ENCODE measurements at regions of chr11 and their contacts with region 1.

Region 1: DNA sequence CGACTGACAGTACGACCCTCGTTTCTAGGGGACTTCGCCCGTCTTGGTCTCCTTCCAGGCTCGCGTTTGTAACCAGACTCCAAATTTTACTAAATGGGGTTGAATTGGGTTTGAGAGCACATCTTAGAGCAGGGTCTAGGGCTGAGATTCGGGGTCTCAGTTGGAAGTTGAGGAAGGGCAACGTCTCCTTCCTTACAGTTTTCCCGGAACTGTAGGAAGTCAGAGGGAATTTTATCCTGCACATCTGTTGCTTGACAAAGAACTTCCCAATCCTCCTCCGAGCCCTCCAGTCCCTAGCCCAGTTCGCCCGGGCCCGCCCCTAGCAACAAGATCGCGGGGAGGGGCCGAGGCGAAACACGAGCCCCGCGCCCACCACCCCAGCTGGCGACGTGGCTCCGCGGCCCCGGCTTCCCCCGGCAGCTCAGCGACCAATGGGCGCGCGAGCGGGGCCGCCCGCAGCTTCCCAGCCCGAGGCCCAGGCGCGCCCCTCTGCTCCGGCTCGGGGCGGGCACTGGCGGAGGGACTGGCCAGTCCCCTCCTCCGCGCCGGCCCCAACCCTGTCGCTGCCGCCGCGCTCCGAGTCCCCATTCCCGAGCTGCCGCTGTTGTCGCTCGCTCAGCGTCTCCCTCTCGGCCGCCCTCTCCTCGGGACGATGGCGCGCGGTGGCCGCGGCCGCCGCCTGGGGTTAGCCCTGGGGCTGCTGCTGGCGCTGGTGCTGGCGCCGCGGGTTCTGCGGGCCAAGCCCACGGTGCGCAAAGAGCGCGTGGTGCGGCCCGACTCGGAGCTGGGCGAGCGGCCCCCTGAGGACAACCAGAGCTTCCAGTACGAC is at the start of gene RCN1:
- DNase-seq: peak; percentile 13
- ATAC-seq: peak; percentile 94
- H3K4me3 ChIP-seq: peak within 1 kb of the TSS; percentile 58 to 70 (median 62)
- H3K27ac ChIP-seq: no peak within 1 kb of the TSS
- H3K4me1 ChIP-seq: peaks cover 28% of the 10 kb centered on the region
- H3K27me3 ChIP-seq: peaks cover 0 to 40% of the 10 kb centered on the region in 2 experiments; a peak in 4 of 5 replicates
- CTCF ChIP-seq: no peak
- EP300 ChIP-seq: no peak
- POLR2A ChIP-seq: no peak
- RAD21 ChIP-seq: no peak
- total RNA-seq, gene RCN1: 14.7 and 28.5 TPM in 2 replicates

Region 2: DNA sequence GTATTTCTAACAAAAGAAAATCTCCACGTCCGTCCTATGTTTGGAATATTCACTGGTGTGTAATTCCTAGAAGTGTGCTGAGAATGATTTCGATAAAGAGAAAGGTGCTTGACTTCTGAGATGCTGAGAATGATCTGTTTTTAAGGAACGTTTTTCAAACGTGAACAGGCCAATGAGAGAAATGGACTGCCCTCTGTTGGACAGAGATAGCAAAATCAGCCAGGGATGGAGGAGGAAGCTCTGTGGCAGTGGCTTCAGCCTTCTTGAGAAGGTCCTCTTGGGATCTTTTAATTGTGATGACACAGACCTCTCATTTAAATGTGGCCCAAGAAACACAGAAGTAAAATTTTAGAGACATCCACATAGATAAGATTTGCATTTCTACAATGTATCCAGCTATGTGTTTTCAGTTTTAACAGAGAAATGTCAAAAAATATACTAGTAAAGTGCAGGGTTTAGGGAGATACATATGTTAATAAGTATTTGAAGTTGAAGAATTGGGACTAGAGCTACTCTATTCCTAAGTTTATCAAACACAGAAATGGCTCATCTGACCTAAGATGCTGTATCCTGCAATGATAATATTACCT is 83.9 kb before region 1 on chr11:
- CTCF ChIA-PET with region 1: no interaction called
- POLR2A ChIA-PET with region 1: no interaction called
- in situ Hi-C with region 1: no loop called
- intact Hi-C with region 1: no loop called
- DNase-seq: peak; percentile 13
- ATAC-seq: peak; percentile 70
- H3K4me3 ChIP-seq: no peak overlapping the region
- H3K27ac ChIP-seq: no peak overlapping the region
- H3K4me1 ChIP-seq: no peaks in the 10 kb centered on the region
- H3K27me3 ChIP-seq: peaks cover 0 to 12% of the 10 kb centered on the region in 2 experiments; a peak in 2 of 5 replicates
- CTCF ChIP-seq: peak; percentile 72
- EP300 ChIP-seq: no peak
- POLR2A ChIP-seq: no peak
- RAD21 ChIP-seq: no peak

Region 3: GRCh38 chr11:32101791-32102190 is 11.0 kb after region 1 on chr11:
- CTCF ChIA-PET with region 1: no interaction called
- POLR2A ChIA-PET with region 1: interaction called, 12 read pairs
- in situ Hi-C with region 1: no loop called
- intact Hi-C with region 1: loop called (anchors 1 kb)
- DNase-seq: no peak
- ATAC-seq: no peak
- H3K4me3 ChIP-seq: no peak overlapping the region
- H3K27ac ChIP-seq: no peak overlapping the region
- H3K4me1 ChIP-seq: peaks cover 17% of the 10 kb centered on the region
- H3K27me3 ChIP-seq: no peaks in the 10 kb centered on the region; a peak in 1 of 5 replicates
- CTCF ChIP-seq: no peak
- EP300 ChIP-seq: no peak
- POLR2A ChIP-seq: no peak
- RAD21 ChIP-seq: no peak

Region 4: GRCh38 chr11:32168924-32169323 is 78.2 kb after region 1 on chr11:
- CTCF ChIA-PET with region 1: no interaction called
- POLR2A ChIA-PET with region 1: no interaction called
- in situ Hi-C with region 1: no loop called
- intact Hi-C with region 1: no loop called
- DNase-seq: no peak
- ATAC-seq: no peak
- H3K4me3 ChIP-seq: no peak overlapping the region
- H3K27ac ChIP-seq: no peak overlapping the region
- H3K4me1 ChIP-seq: no peaks in the 10 kb centered on the region
- H3K27me3 ChIP-seq: peaks cover 0 to 26% of the 10 kb centered on the region in 2 experiments; a peak in 3 of 5 replicates
- CTCF ChIP-seq: no peak
- EP300 ChIP-seq: no peak
- POLR2A ChIP-seq: no peak
- RAD21 ChIP-seq: no peak

Region 5: GRCh38 chr11:33039274-33040032 is 948.7 kb after region 1 on chr11 and contains the start of gene TCP11L1:
- CTCF ChIA-PET with region 1: no interaction called
- POLR2A ChIA-PET with region 1: no interaction called
- in situ Hi-C with region 1: no loop called
- intact Hi-C with region 1: loop called (anchors 5 kb)
- DNase-seq: peak; percentile 83
- ATAC-seq: peak; percentile 92
- H3K4me3 ChIP-seq: peak within 1 kb of the TSS; percentile 74 to 90 (median 78)
- H3K27ac ChIP-seq: peak within 1 kb of the TSS; percentile 97
- H3K4me1 ChIP-seq: peaks cover 46% of the 10 kb centered on the region
- H3K27me3 ChIP-seq: no peaks in the 10 kb centered on the region
- CTCF ChIP-seq: peak; percentile 60
- EP300 ChIP-seq: no peak
- POLR2A ChIP-seq: peak; percentile 47 to 54; a peak in 2 of 4 replicates
- RAD21 ChIP-seq: 0 out of 2 replicates have a peak, but pooled peaks have one; percentile 10
- total RNA-seq, gene TCP11L1: 10.1 and 14.0 TPM in 2 replicates